ENCODE measurements at regions of chr14 and their contacts with region 1.

Region 1: DNA sequence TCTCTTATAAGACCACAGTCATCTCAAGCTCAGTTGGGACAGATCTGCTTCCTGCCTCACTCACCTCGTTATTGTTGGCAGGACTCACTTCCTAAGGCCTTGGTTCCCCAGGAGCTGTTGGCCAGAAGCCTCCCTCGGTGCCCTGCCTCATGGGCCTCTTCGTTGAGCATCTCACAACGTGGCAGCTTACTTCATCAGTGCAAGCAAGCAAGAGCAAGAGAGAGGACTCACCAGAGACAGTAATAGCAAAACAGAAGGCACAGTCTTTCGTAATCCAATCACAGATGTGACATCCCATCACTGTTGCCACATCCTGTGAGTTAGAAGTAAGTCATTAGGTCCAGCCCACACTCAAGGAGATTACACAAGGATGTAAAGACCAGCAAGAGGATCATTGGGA is 5.1 kb upstream of the NUMB start:
- DNase-seq: no peak
- ATAC-seq: peak; percentile 56

Region 2: DNA sequence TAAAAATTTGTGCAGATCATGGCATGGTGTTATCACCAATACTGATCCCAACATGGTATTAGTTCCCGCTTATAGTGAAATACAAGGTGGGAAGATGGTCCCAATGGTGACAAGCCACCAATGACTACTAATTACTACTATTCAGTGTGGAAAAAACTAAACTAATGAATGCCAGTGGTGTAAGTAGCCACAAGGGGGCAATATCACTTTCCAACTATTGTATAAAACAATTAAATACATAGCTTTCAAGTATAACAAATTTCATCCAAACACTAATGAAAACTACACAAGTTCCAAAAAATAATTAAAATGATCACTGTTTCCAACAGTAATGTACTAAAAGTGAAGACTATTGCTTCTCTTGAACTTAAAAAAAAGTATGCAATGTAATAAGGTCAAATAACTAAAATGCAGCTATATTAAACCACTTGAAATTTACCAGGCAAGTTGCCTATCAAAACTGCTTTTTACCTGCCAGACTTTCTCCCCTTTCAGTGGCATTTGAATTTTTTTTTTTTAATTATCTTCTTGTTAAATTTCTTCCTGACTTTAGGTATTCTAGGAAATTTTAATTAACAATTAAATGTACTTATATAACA is 168.1 kb before region 1 on chr14:
- intact Hi-C with region 1: loop called (anchors 10 kb)
- DNase-seq: no peak
- ATAC-seq: no peak

Region 3: DNA sequence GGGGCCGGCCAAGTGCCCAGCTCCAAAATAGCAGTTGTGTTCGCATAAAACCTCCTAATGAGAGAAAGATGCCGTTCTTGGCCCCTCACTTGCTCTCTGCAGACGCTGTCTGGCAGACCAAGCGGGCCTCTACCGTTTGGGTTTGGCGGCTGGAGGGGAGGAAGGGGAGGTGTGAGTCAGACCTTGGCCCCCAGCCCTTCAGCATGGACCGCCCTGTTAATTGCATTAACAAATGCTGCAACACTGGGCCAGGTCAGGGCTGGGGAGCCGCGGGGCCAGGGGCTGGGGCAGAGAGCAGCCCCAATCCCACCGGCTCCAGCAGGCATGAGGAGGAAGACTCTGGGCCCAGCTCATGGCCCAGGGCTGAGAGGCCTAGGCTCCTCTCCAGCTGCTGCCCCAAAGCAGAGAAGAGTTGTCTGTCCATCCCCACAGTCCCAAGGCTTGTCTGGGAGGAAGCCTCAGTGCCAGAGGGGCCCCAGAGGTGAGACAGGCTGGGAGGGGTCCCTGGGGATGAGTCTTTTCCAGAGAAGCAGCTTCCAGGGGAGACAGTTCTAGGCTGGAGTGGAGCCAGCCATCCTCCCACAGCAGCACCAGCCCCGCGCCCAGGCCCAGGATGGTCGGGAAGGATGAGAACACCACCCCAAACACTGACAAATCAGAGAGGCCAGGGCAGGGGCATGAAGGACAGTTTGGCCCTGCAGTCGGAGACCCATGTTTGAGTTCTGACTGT is 1131.8 kb after region 1 on chr14:
- intact Hi-C with region 1: no loop called
- DNase-seq: peak; percentile 83
- ATAC-seq: peak; percentile 67